GM12878 (cell line): ENCODE measurements at regions of chr1 and their contacts with region 1.

Region 1: GRCh38 chr1:153231363-153231762 is 14.0 kb downstream of the PRR9 start:
- DNase-seq: no peak
- ATAC-seq: no peak
- H3K4me3 ChIP-seq: no peak overlapping the region
- H3K27ac ChIP-seq: no peak overlapping the region
- H3K4me1 ChIP-seq: no peaks in the 10 kb centered on the region
- H3K27me3 ChIP-seq: no peaks in the 10 kb centered on the region; a peak in 1 of 4 replicates
- CTCF ChIP-seq: no peak
- EP300 ChIP-seq: no peak
- POLR2A ChIP-seq: no peak
- RAD21 ChIP-seq: no peak

Region 2: GRCh38 chr1:153192697-153193096 is 38.7 kb before region 1 on chr1:
- CTCF ChIA-PET with region 1: interaction called, 9 read pairs
- POLR2A ChIA-PET with region 1: no interaction called
- RAD21 ChIA-PET with region 1: interaction called, 10 read pairs
- SMC1A ChIA-PET with region 1: interaction called, 10 read pairs
- in situ Hi-C with region 1: no loop called
- intact Hi-C with region 1: no loop called
- DNase-seq: no peak
- ATAC-seq: peak; percentile 77
- H3K4me3 ChIP-seq: no peak overlapping the region
- H3K27ac ChIP-seq: no peak overlapping the region
- H3K4me1 ChIP-seq: no peaks in the 10 kb centered on the region
- H3K27me3 ChIP-seq: no peaks in the 10 kb centered on the region; a peak in 1 of 4 replicates
- CTCF ChIP-seq: peak; percentile 44 to 57 (median 46); a peak in 5 of 6 replicates
- EP300 ChIP-seq: no peak
- POLR2A ChIP-seq: no peak
- RAD21 ChIP-seq: peak; percentile 83

Region 3: DNA sequence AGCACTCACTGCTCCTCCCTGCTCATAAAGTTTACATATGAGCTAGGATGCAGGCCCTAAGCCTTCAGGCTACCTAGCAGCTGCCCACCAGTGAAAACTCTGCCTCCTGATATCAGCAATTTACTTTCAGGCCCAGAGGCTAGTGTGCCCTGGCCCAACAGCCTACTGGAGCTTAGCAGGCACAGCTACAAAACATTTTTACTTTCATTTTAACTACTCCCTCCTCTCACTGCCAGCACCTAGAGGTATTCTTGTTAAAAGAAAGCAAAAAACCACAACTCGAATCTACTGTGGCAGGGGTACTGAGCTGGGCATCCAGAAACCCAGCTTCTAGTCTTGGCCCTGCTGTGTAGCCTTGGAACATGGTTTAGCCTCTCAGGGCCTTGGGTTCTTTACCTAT is 22.3 kb after region 1 on chr1:
- CTCF ChIA-PET with region 1: interaction called, 27 read pairs
- POLR2A ChIA-PET with region 1: interaction called, 5 read pairs
- RAD21 ChIA-PET with region 1: interaction called, 9 read pairs
- SMC1A ChIA-PET with region 1: interaction called, 42 read pairs
- in situ Hi-C with region 1: no loop called
- intact Hi-C with region 1: no loop called
- DNase-seq: no peak
- ATAC-seq: peak; percentile 92
- H3K4me3 ChIP-seq: no peak overlapping the region
- H3K27ac ChIP-seq: no peak overlapping the region
- H3K4me1 ChIP-seq: no peaks in the 10 kb centered on the region
- H3K27me3 ChIP-seq: no peaks in the 10 kb centered on the region
- CTCF ChIP-seq: no peak
- EP300 ChIP-seq: no peak
- POLR2A ChIP-seq: no peak
- RAD21 ChIP-seq: no peak

Region 4: DNA sequence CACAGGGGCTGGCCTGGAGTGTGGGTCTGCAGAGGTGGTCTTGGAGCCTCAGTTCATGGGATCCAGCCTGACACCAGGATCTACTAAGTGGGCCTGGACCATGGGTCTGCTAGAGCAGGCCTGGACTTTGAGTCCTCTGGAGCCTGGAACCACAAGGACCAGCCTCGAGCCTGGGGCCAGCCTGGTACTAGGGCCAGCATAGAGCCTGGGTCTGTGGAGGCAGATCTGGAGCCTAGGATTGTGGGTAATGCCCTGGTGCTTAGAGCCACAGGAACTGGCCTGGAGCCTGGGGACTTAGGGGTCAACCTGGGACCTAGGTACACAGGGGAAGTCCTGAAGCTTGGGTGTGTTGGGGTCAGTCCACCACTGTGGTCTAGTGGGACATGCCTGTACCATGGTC is 40.8 kb after region 1 on chr1:
- CTCF ChIA-PET with region 1: interaction called, 69 read pairs
- POLR2A ChIA-PET with region 1: interaction called, 3 read pairs
- RAD21 ChIA-PET with region 1: interaction called, 12 read pairs
- SMC1A ChIA-PET with region 1: interaction called, 20 read pairs
- in situ Hi-C with region 1: no loop called
- intact Hi-C with region 1: no loop called
- DNase-seq: no peak
- ATAC-seq: no peak
- H3K4me3 ChIP-seq: no peak overlapping the region
- H3K27ac ChIP-seq: no peak overlapping the region
- H3K4me1 ChIP-seq: peaks cover 3% of the 10 kb centered on the region
- H3K27me3 ChIP-seq: no peaks in the 10 kb centered on the region
- CTCF ChIP-seq: no peak
- EP300 ChIP-seq: no peak
- POLR2A ChIP-seq: no peak
- RAD21 ChIP-seq: no peak

Region 5: GRCh38 chr1:153344531-153344981 is 113.2 kb after region 1 on chr1:
- CTCF ChIA-PET with region 1: interaction called, 8 read pairs
- POLR2A ChIA-PET with region 1: interaction called, 8 read pairs
- RAD21 ChIA-PET with region 1: interaction called, 15 read pairs
- SMC1A ChIA-PET with region 1: interaction called, 9 read pairs
- in situ Hi-C with region 1: no loop called
- intact Hi-C with region 1: no loop called
- DNase-seq: no peak
- ATAC-seq: peak; percentile 24
- H3K4me3 ChIP-seq: no peak overlapping the region; the same call in 1 of the 2 replicates
- H3K27ac ChIP-seq: peak overlapping the region; percentile 86
- H3K4me1 ChIP-seq: peaks cover 33% of the 10 kb centered on the region
- H3K27me3 ChIP-seq: no peaks in the 10 kb centered on the region
- CTCF ChIP-seq: no peak
- EP300 ChIP-seq: peak in 1 of 2 experiments; percentile 23; a peak in 1 of 4 replicates
- POLR2A ChIP-seq: no peak; the same call in 1 of the 2 replicates
- RAD21 ChIP-seq: no peak